ENCODE measurements at regions of chr19 and their contacts with region 1.

Region 1: DNA sequence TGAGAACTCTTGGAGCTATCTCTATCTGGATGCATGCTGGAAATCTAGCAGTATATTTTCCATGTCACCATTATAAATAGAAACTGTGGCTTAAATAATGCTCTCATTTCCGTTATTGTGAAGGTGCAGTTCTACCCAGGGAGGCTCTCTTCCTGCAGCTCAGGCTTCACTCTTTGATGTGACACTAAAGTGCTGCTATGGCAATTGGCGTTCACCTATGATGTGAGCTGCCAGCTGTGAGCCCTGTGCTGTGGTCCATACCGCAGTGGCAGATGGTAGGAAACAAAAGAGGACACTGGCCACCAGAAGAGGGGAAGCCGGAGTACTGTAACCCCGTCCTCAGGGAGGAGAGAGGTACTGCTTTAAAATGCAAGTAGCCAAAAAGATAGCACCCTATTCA is 40.6 kb upstream of the ZNF681 start:
- DNase-seq: no peak
- ATAC-seq: peak in 4 of 8 donors; percentile 30 to 69 (median 44)
- H3K4me3 ChIP-seq: no peak overlapping the region
- H3K27ac ChIP-seq: no peak overlapping the region
- H3K4me1 ChIP-seq: peaks cover 0 to 9% (median 0%) of the 10 kb centered on the region in 9 donors
- H3K27me3 ChIP-seq: no peaks in the 10 kb centered on the region
- CTCF ChIP-seq: no peak

Region 2: DNA sequence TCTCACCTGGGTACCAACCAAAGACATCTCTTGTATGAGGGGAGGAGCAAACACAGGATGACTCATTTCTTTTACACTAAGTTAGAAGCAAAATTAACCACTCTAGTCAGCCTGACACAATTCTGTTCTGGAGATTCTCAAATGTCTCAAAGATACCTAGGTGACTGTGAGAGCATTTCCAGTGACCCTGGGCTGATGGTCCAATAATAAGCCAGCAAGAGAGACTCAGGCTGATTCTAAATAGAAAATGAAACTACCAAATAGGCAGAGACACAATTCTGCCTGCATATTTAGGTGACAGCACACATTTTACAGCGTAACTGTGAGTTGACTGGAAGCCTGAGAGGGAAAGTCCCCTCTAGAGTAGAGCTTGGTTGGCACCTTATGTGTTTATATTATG is 420.4 kb before region 1 on chr19:
- intact Hi-C with region 1: loop called in 1 of 10 experiments (anchors 5 kb)
- DNase-seq: no peak
- ATAC-seq: peak; percentile 51 to 87 (median 74)
- H3K4me3 ChIP-seq: peak overlapping the region in 5 of 10 donors; percentile 8 to 28 (median 18)
- H3K27ac ChIP-seq: peak overlapping the region; percentile 37 to 85 (median 70)
- H3K4me1 ChIP-seq: peaks cover 4 to 59% (median 30%) of the 10 kb centered on the region in 9 donors
- H3K27me3 ChIP-seq: no peaks in the 10 kb centered on the region
- CTCF ChIP-seq: no peak

Region 3: GRCh38 chr19:23699082-23699761 is 100.1 kb before region 1 on chr19:
- intact Hi-C with region 1: no loop called
- DNase-seq: no peak
- ATAC-seq: peak in 2 of 8 donors; percentile 25 to 37
- H3K4me3 ChIP-seq: no peak overlapping the region
- H3K27ac ChIP-seq: no peak overlapping the region
- H3K4me1 ChIP-seq: no peaks in the 10 kb centered on the region
- H3K27me3 ChIP-seq: no peaks in the 10 kb centered on the region
- CTCF ChIP-seq: no peak

Measured in heart right ventricle (tissue), 16 donors.